T-cell (primary cell): ENCODE measurements at regions of chr21 and their contacts with region 1.

Region 1: GRCh38 chr21:17780539-17780938 is 38.6 kb downstream of the C21orf91 start:
- DNase-seq: peak in 32 of 35 experiments; percentile 18 to 83 (median 48)
- ATAC-seq: peak; percentile 46 to 66 (median 50)
- H3K4me3 ChIP-seq: no peak overlapping the region
- H3K4me3 Mint-ChIP-seq: peak overlapping the region; percentile 19 to 64 (median 37)
- H3K27ac ChIP-seq: peak overlapping the region; percentile 82
- H3K27ac Mint-ChIP-seq: peak overlapping the region; percentile 94 to 96
- H3K4me1 ChIP-seq: peaks cover 50 to 59% of the 10 kb centered on the region in 2 experiments
- H3K4me1 Mint-ChIP-seq: peaks cover 77 to 89% (median 84%) of the 10 kb centered on the region in 3 donors
- H3K27me3 ChIP-seq: no peaks in the 10 kb centered on the region
- H3K27me3 Mint-ChIP-seq: no peaks in the 10 kb centered on the region

Region 2: GRCh38 chr21:17402937-17403336 is 377.6 kb before region 1 on chr21:
- CTCF ChIA-PET with region 1: no interaction called
- POLR2A ChIA-PET with region 1: no interaction called
- DNase-seq: no peak
- ATAC-seq: no peak
- H3K4me3 ChIP-seq: no peak overlapping the region
- H3K4me3 Mint-ChIP-seq: no peak overlapping the region
- H3K27ac ChIP-seq: no peak overlapping the region
- H3K27ac Mint-ChIP-seq: no peak overlapping the region
- H3K4me1 ChIP-seq: no peaks in the 10 kb centered on the region
- H3K4me1 Mint-ChIP-seq: no peaks in the 10 kb centered on the region
- H3K27me3 ChIP-seq: no peaks in the 10 kb centered on the region
- H3K27me3 Mint-ChIP-seq: no peaks in the 10 kb centered on the region

Region 3: GRCh38 chr21:17578876-17579275 is 201.7 kb before region 1 on chr21:
- CTCF ChIA-PET with region 1: no interaction called
- POLR2A ChIA-PET with region 1: interaction called in 1 of 2 experiments, 12 read pairs
- DNase-seq: no peak
- ATAC-seq: no peak
- H3K4me3 ChIP-seq: no peak overlapping the region
- H3K4me3 Mint-ChIP-seq: no peak overlapping the region
- H3K27ac ChIP-seq: no peak overlapping the region
- H3K27ac Mint-ChIP-seq: no peak overlapping the region
- H3K4me1 ChIP-seq: no peaks in the 10 kb centered on the region
- H3K4me1 Mint-ChIP-seq: no peaks in the 10 kb centered on the region
- H3K27me3 ChIP-seq: peaks cover 0 to 4% of the 10 kb centered on the region in 2 experiments
- H3K27me3 Mint-ChIP-seq: peaks cover 3% of the 10 kb centered on the region in 2 donors

Region 4: DNA sequence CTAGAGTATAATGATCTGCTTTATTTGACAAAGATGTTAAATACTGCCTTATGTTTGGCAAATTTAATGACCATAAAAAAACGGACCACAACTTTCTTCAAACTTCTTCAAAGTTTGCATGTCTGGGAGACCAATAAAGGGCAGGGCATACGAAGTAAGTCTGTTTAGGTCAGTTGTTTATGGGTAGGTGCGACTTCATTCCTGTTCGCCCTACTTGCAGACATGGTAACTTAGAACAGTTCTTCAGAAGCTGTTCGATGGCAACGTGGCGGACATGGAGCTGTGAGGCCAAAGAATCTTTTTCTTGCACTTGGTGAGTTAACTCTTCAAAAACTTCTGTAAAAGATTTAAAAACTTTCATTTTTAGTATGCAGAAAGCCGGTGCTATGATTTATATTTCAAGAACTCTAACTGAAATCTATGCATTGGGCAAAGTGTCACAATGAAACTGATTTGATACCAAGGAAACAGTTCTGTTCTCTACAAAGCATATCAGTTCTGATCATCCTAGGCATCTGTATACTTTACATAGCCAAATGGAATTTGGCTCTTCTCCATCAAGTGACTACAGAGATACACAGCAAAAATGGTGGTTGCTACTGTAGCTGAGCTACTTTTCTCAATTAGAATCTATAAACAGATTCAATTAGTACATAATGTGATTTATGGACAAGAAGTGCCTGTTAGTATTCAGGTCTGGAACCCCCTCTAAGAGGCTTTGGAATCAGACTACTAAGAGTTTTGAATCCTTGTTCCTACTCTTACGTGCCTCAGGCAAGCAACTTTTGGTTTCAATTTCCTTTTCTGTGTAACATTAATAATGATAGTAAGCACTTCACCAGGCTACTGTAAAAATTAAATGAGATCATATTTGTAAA is 12.9 kb after region 1 on chr21:
- CTCF ChIA-PET with region 1: interaction called, 3 to 14 read pairs
- POLR2A ChIA-PET with region 1: interaction called, 3 to 15 read pairs
- DNase-seq: peak in 2 of 35 experiments; percentile 17 to 64
- ATAC-seq: peak; percentile 55 to 63 (median 58)
- H3K4me3 ChIP-seq: peak overlapping the region in 1 of 2 donors; percentile 46
- H3K4me3 Mint-ChIP-seq: peak overlapping the region; percentile 66 to 72 (median 71)
- H3K27ac ChIP-seq: peak overlapping the region; percentile 90
- H3K27ac Mint-ChIP-seq: peak overlapping the region; percentile 88 to 97
- H3K4me1 ChIP-seq: peaks cover 13 to 25% of the 10 kb centered on the region in 2 experiments
- H3K4me1 Mint-ChIP-seq: peaks cover 65 to 81% (median 80%) of the 10 kb centered on the region in 3 donors
- H3K27me3 ChIP-seq: no peaks in the 10 kb centered on the region
- H3K27me3 Mint-ChIP-seq: no peaks in the 10 kb centered on the region

Region 5: GRCh38 chr21:17798796-17799195 is 18.3 kb after region 1 on chr21:
- CTCF ChIA-PET with region 1: interaction called, 3 to 14 read pairs
- POLR2A ChIA-PET with region 1: interaction called, 3 to 15 read pairs
- DNase-seq: no peak
- ATAC-seq: no peak
- H3K4me3 ChIP-seq: no peak overlapping the region
- H3K4me3 Mint-ChIP-seq: no peak overlapping the region
- H3K27ac ChIP-seq: peak overlapping the region; percentile 74
- H3K27ac Mint-ChIP-seq: peak overlapping the region; percentile 9 to 82
- H3K4me1 ChIP-seq: peaks cover 17 to 18% of the 10 kb centered on the region in 2 experiments
- H3K4me1 Mint-ChIP-seq: peaks cover 62 to 67% (median 66%) of the 10 kb centered on the region in 3 donors
- H3K27me3 ChIP-seq: no peaks in the 10 kb centered on the region
- H3K27me3 Mint-ChIP-seq: no peaks in the 10 kb centered on the region

Region 6: DNA sequence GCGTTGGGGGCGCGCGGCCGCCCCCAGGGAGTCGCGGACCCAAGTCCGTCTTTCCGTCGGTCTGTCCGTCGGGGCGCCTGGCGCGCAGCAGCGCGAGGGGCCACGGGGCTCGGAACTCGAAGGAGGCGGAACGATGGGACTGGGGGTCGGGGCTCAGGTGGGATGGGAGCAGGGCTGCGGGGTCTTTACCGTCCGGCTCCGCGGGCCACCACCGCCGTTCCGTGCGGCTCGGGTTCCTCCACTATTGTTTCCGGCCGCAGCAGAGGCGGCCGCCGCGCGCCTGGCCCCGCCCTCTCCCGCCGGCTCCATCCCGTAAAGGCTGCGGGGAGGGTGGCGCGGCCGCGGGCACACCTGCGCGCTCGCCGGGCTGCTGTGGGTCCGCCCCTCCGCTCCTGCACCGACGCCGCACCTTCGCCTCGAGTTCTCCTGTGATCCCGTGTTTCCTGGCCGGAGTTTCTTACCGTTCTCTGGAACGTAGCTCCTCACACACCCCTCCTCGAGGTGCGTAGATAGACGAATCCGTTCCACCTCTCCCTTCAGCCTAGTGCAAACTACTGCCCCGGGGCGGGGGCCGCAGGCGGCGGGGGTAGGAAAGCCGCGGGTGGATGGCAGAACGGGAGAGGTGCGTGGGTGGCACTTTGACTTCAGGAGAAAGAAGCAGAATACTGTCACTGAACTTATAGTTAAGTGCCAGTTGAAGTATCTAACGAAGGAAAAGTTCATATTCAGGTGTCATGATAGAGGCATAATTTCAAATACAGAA is 38.8 kb after region 1 on chr21 and contains the start of gene C21orf91:
- CTCF ChIA-PET with region 1: interaction called, 8 to 17 read pairs
- POLR2A ChIA-PET with region 1: interaction called, 11 to 22 read pairs
- DNase-seq: peak; percentile 71 to 89 (median 82)
- ATAC-seq: peak; percentile 87 to 89 (median 88)
- H3K4me3 ChIP-seq: peak within 1 kb of the TSS; percentile 61 to 77
- H3K4me3 Mint-ChIP-seq: peak within 1 kb of the TSS; percentile 82 to 99 (median 95)
- H3K27ac ChIP-seq: peak within 1 kb of the TSS; percentile 84
- H3K27ac Mint-ChIP-seq: peak within 1 kb of the TSS; percentile 99
- H3K4me1 ChIP-seq: peaks cover 15 to 35% of the 10 kb centered on the region in 2 experiments
- H3K4me1 Mint-ChIP-seq: peaks cover 46 to 51% (median 49%) of the 10 kb centered on the region in 3 donors
- H3K27me3 ChIP-seq: no peaks in the 10 kb centered on the region
- H3K27me3 Mint-ChIP-seq: no peaks in the 10 kb centered on the region
- total RNA-seq, gene C21orf91: 41.1 to 52.6 (median 48.5) TPM